GM12878 (cell line): ENCODE measurements at regions of chr3 and their contacts with region 1.

Region 1: GRCh38 chr3:34387826-34388564 is 589.6 kb downstream of the PDCD6IP start:
- DNase-seq: no peak
- ATAC-seq: no peak
- H3K4me3 ChIP-seq: no peak overlapping the region
- H3K27ac ChIP-seq: no peak overlapping the region
- H3K4me1 ChIP-seq: no peaks in the 10 kb centered on the region
- H3K27me3 ChIP-seq: no peaks in the 10 kb centered on the region
- CTCF ChIP-seq: no peak
- EP300 ChIP-seq: no peak
- POLR2A ChIP-seq: no peak
- RAD21 ChIP-seq: no peak

Region 2: GRCh38 chr3:34571306-34572093 is 183.5 kb after region 1 on chr3:
- CTCF ChIA-PET with region 1: no interaction called
- POLR2A ChIA-PET with region 1: no interaction called
- RAD21 ChIA-PET with region 1: no interaction called
- SMC1A ChIA-PET with region 1: no interaction called
- in situ Hi-C with region 1: no loop called
- intact Hi-C with region 1: loop called (anchors 5 kb)
- DNase-seq: no peak
- ATAC-seq: no peak
- H3K4me3 ChIP-seq: no peak overlapping the region
- H3K27ac ChIP-seq: no peak overlapping the region
- H3K4me1 ChIP-seq: no peaks in the 10 kb centered on the region
- H3K27me3 ChIP-seq: no peaks in the 10 kb centered on the region
- CTCF ChIP-seq: no peak
- EP300 ChIP-seq: no peak
- POLR2A ChIP-seq: no peak
- RAD21 ChIP-seq: no peak